ENCODE measurements at regions of chr6 and their contacts with region 1.

Region 1: DNA sequence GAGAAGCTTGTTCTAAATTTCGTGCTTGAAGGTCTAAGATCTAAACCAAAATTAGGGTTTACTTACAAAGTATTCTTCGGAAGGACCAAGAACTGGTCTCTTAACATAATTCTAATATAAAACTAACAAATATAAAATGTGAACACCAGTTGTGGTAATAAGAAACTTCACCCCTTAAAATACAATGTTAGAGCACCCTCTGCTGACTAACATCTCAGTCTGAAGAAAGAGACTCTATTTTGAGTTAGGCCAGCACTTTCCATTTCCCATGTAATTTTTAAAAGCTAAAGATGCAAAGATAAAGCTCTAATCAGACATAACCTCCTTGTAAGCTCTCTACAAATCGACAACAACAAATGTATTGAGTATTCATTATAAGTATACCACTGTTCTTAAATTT is 24.6 kb downstream of the ATG5 start:
- DNase-seq: peak; percentile 65
- ATAC-seq: peak; percentile 79
- H3K4me3 ChIP-seq: no peak overlapping the region
- H3K27ac ChIP-seq: no peak overlapping the region
- H3K4me1 ChIP-seq: no peaks in the 10 kb centered on the region
- H3K27me3 ChIP-seq: no peaks in the 10 kb centered on the region
- CTCF ChIP-seq: peak; percentile 69
- POLR2A ChIP-seq: no peak
- RAD21 ChIP-seq: peak; percentile 71

Region 2: GRCh38 chr6:105431226-105431625 is 869.7 kb before region 1 on chr6:
- CTCF ChIA-PET with region 1: interaction called, 3 read pairs
- POLR2A ChIA-PET with region 1: no interaction called
- dilution Hi-C with region 1: no loop called
- in situ Hi-C with region 1: loop called (anchors 10 kb)
- intact Hi-C with region 1: loop called (anchors 2 kb)
- DNase-seq: peak; percentile 68
- ATAC-seq: no peak
- H3K4me3 ChIP-seq: no peak overlapping the region
- H3K27ac ChIP-seq: no peak overlapping the region
- H3K4me1 ChIP-seq: peaks cover 23% of the 10 kb centered on the region
- H3K27me3 ChIP-seq: no peaks in the 10 kb centered on the region
- CTCF ChIP-seq: peak; percentile 70
- POLR2A ChIP-seq: no peak
- RAD21 ChIP-seq: peak; percentile 61

Region 3: GRCh38 chr6:106097411-106098231 is 203.3 kb before region 1 on chr6:
- CTCF ChIA-PET with region 1: no interaction called
- POLR2A ChIA-PET with region 1: no interaction called
- dilution Hi-C with region 1: no loop called
- in situ Hi-C with region 1: loop called (anchors 10 kb)
- intact Hi-C with region 1: no loop called
- DNase-seq: peak; percentile 63
- ATAC-seq: peak; percentile 44
- H3K4me3 ChIP-seq: peak overlapping the region; percentile 65
- H3K27ac ChIP-seq: peak overlapping the region; percentile 97
- H3K4me1 ChIP-seq: peaks cover 5% of the 10 kb centered on the region; the same call in 1 of the 2 replicates
- H3K27me3 ChIP-seq: no peaks in the 10 kb centered on the region
- CTCF ChIP-seq: no peak
- POLR2A ChIP-seq: no peak
- RAD21 ChIP-seq: no peak

Region 4: DNA sequence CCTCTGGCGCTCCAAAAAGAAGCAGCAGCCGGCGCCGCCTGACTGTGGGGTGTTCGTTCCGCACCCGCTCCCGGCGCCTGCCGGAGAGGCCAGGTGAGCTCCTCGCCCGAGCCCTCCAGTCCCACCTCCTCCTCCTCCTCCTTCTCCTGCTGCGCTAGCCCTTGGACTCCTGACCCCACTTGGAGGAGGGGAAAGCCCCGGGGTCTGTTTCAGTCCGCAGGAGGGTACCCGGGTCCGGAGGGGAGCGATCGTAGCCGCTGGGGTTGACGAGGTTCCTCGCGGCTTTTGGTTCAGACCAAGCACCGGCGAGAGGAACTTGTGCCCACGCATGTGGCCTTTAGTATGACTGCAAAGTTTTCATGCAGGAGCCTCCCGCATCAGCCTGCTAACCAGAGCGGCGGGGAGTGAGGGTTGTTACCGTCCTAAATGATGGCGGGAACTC is 60.1 kb after region 1 on chr6:
- CTCF ChIA-PET with region 1: no interaction called
- POLR2A ChIA-PET with region 1: no interaction called
- dilution Hi-C with region 1: no loop called
- in situ Hi-C with region 1: no loop called
- intact Hi-C with region 1: no loop called
- DNase-seq: no peak
- ATAC-seq: 0 out of 2 replicates have a peak, but pooled peaks have one; percentile 13
- H3K4me3 ChIP-seq: peak overlapping the region; percentile 9; the same call in 1 of the 2 replicates
- H3K27ac ChIP-seq: no peak overlapping the region
- H3K4me1 ChIP-seq: peaks cover 3% of the 10 kb centered on the region; the same call in 1 of the 2 replicates
- H3K27me3 ChIP-seq: peaks cover 28% of the 10 kb centered on the region
- CTCF ChIP-seq: no peak
- POLR2A ChIP-seq: no peak
- RAD21 ChIP-seq: no peak

Region 5: GRCh38 chr6:106381871-106382270 is 80.9 kb after region 1 on chr6:
- CTCF ChIA-PET with region 1: no interaction called
- POLR2A ChIA-PET with region 1: no interaction called
- dilution Hi-C with region 1: no loop called
- in situ Hi-C with region 1: no loop called
- intact Hi-C with region 1: no loop called
- DNase-seq: no peak
- ATAC-seq: no peak
- H3K4me3 ChIP-seq: no peak overlapping the region
- H3K27ac ChIP-seq: no peak overlapping the region
- H3K4me1 ChIP-seq: no peaks in the 10 kb centered on the region
- H3K27me3 ChIP-seq: peaks cover 10% of the 10 kb centered on the region
- CTCF ChIP-seq: no peak
- POLR2A ChIP-seq: no peak
- RAD21 ChIP-seq: no peak

Region 6: DNA sequence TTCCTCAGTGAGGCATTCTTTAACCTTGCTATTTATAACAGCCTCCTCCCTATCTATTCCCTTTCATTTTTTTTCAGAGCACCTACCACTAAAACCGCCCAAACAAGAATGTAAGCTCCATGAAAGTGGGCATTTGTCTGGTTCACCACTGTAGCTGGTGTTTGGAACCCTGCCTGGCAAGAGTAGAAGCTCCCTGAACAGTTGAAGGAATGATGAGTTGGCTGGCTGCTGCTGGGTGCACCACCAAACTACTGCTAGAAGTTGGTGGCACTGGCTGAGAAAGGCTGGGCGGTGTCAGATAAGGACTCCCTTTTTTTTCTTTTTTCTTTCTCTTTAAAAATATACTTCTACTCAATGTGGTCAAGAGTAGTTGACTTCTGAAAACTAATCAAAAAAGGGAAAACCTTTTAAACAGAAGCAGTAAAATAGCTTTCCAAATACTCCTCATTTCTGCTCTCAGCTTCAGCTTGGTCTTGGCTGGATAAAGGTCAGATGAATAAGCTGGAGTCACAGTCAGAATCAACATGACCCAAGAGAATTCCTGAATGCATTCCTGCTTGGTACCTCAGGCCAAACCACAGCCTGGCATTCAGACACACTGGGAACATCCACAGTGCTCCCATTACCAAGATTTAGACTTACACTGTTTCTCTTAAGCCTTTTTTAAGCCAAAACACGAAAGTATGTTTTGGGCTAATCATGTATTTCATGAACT is 290.3 kb after region 1 on chr6:
- CTCF ChIA-PET with region 1: no interaction called
- POLR2A ChIA-PET with region 1: no interaction called
- dilution Hi-C with region 1: no loop called
- in situ Hi-C with region 1: no loop called
- intact Hi-C with region 1: no loop called
- DNase-seq: peak; percentile 88
- ATAC-seq: peak; percentile 96
- H3K4me3 ChIP-seq: no peak overlapping the region
- H3K27ac ChIP-seq: peak overlapping the region; percentile 86
- H3K4me1 ChIP-seq: peaks cover 6% of the 10 kb centered on the region
- H3K27me3 ChIP-seq: no peaks in the 10 kb centered on the region
- CTCF ChIP-seq: no peak
- POLR2A ChIP-seq: no peak
- RAD21 ChIP-seq: no peak

Measured in IMR-90 (cell line).